Heart right ventricle (tissue), 16 donors: ENCODE measurements at regions of chr1 and their contacts with region 1.

Region 1: GRCh38 chr1:151993654-151994496 is at the start of gene S100A10:
- DNase-seq: peak; percentile 82 to 88
- ATAC-seq: peak; percentile 80 to 94 (median 86)
- H3K4me3 ChIP-seq: peak within 1 kb of the TSS; percentile 73 to 97 (median 88)
- H3K27ac ChIP-seq: peak within 1 kb of the TSS; percentile 94 to 99 (median 96)
- H3K4me1 ChIP-seq: peaks cover 19 to 58% (median 48%) of the 10 kb centered on the region in 9 donors
- H3K27me3 ChIP-seq: peaks cover 0 to 5% (median 0%) of the 10 kb centered on the region in 7 donors
- CTCF ChIP-seq: no peak
- total RNA-seq, gene S100A10: 71.3 to 519 (median 235) TPM

Region 2: DNA sequence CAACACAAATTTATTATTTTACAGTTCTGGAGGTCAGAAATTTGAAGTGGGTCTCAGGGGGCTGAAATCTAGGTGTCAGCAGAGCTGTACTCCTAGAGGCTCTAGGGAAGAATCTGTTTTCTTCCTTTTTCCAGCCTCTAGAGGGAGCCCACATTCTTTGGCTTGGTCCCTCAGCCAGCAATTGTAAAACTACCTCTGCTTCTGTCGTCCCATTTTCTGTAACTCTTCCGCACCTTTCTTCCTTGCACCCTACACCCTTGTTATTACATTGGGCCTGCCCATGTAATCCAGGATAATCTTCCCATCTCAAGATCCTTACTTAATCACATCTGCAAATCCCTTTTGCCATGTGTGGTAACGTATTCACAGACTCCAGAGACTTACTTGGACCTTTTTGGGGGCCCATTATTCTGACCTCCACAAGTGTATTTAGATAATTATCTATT is 59.8 kb before region 1 on chr1:
- intact Hi-C with region 1: loop called (anchors 1 to 5 kb)
- DNase-seq: peak in 1 of 2 donors; percentile 55
- ATAC-seq: peak; percentile 78 to 92 (median 89)
- H3K4me3 ChIP-seq: no peak overlapping the region
- H3K27ac ChIP-seq: no peak overlapping the region
- H3K4me1 ChIP-seq: peaks cover 0 to 4% (median 0%) of the 10 kb centered on the region in 9 donors
- H3K27me3 ChIP-seq: no peaks in the 10 kb centered on the region
- CTCF ChIP-seq: peak; percentile 83 to 96 (median 87)

Region 3: DNA sequence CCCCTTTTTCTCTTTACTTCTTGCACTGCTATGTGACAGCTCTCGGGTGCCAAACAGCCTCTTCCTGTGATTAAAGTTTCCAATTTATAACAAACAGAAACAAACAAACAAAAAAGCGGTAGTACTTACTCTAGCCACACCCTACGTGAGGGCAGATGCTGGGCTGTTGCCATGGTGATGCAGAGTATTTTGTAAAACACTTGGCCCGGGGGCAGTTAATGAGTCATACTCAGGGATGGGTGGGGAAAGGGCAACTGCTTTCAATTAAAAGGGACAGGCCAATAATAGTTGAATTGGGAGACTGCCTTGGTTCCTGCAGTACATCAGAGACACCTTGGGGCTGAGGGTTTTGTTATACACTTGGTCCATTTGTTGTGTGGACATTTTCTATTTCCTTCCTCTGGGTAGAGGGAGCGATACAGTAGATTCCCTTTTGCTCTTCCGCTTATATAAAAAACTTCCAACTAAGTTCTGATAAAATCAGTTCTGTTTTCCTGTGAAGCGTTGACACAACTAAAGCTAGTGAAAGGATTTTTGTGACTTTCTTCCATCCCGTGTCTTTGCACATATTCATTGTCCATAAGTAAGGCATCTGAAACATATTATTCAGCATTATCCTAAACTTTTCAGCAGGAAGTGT is 48.0 kb before region 1 on chr1:
- intact Hi-C with region 1: loop called in 3 of 10 experiments (anchors 2 to 5 kb)
- DNase-seq: peak; percentile 76 to 92
- ATAC-seq: peak; percentile 77 to 94 (median 88)
- H3K4me3 ChIP-seq: peak overlapping the region in 3 of 10 donors; percentile 1 to 20 (median 6)
- H3K27ac ChIP-seq: peak overlapping the region; percentile 66 to 89 (median 78)
- H3K4me1 ChIP-seq: peaks cover 5 to 60% (median 33%) of the 10 kb centered on the region in 9 donors
- H3K27me3 ChIP-seq: no peaks in the 10 kb centered on the region
- CTCF ChIP-seq: no peak

Region 4: DNA sequence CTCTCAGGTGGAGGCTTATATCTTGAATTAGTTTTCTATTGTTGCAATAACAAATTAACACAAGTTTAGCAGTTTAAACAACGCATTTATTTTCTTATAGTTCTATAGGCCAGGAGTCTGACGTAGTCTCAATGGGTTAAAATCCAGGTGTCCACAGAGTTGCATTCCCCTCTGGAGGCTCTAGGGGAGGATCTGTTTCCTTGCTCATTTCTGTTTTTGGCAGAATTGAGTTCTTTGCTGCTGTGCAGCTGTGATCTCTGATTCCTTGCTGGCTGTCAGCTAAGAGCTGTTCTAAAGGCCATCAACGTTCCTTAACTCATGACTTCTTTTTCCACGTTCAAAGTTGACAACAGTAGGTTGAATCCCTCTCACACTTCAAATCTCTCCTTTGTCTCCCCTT is 32.0 kb before region 1 on chr1:
- intact Hi-C with region 1: loop called in 1 of 10 experiments (anchors 2 kb)
- DNase-seq: no peak
- ATAC-seq: peak in 2 of 8 donors; percentile 13 to 42
- H3K4me3 ChIP-seq: no peak overlapping the region
- H3K27ac ChIP-seq: peak overlapping the region in 3 of 10 donors; percentile 31 to 39 (median 33)
- H3K4me1 ChIP-seq: peaks cover 0 to 41% (median 25%) of the 10 kb centered on the region in 9 donors
- H3K27me3 ChIP-seq: no peaks in the 10 kb centered on the region
- CTCF ChIP-seq: peak in 2 of 9 donors; percentile 13 to 19

Region 5: DNA sequence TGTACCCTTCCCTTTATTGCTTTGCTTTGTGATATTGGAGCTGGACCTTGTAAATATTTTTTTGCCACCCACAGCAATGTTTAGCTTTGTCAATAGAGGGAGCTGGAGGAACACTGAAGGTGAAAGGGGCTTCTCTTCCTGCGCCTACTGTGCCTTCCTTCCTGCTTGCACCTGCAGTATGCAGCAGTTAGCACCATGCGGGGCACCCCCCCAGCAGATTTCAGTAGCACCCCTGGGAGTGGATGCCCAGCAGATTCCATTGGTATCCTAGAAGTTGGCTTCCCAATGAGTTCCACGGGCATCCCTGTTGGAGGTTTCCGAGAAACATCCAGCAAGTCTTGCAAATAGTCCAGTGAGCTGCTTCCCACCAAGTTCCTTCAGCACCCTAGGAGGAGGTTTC is 25.8 kb before region 1 on chr1:
- intact Hi-C with region 1: loop called in 5 of 10 experiments (anchors 1 to 2 kb)
- DNase-seq: peak in 1 of 2 donors; percentile 36
- ATAC-seq: peak; percentile 47 to 83 (median 64)
- H3K4me3 ChIP-seq: no peak overlapping the region
- H3K27ac ChIP-seq: no peak overlapping the region
- H3K4me1 ChIP-seq: peaks cover 0 to 57% (median 26%) of the 10 kb centered on the region in 9 donors
- H3K27me3 ChIP-seq: no peaks in the 10 kb centered on the region
- CTCF ChIP-seq: peak; percentile 55 to 79 (median 76)